ENCODE measurements at regions of chr14 and their contacts with region 1.

Region 1: GRCh38 chr14:22059201-22059600 is 385.6 kb upstream of the OR4E1 start:
- DNase-seq: no peak
- H3K4me3 ChIP-seq: no peak overlapping the region
- H3K27ac ChIP-seq: no peak overlapping the region
- H3K4me1 ChIP-seq: no peaks in the 10 kb centered on the region
- H3K27me3 ChIP-seq: no peaks in the 10 kb centered on the region
- CTCF ChIP-seq: no peak
- EP300 ChIP-seq: no peak
- POLR2A ChIP-seq: no peak
- RAD21 ChIP-seq: no peak

Region 2: GRCh38 chr14:21987937-21988336 is 71.3 kb before region 1 on chr14:
- CTCF ChIA-PET with region 1: no interaction called
- POLR2A ChIA-PET with region 1: no interaction called
- DNase-seq: no peak
- H3K4me3 ChIP-seq: no peak overlapping the region
- H3K27ac ChIP-seq: no peak overlapping the region
- H3K4me1 ChIP-seq: no peaks in the 10 kb centered on the region
- H3K27me3 ChIP-seq: peaks cover 0 to 1% (median 0%) of the 10 kb centered on the region in 4 experiments; a peak in 1 of 7 replicates
- CTCF ChIP-seq: peak in 2 of 3 experiments; percentile 62 to 78; a peak in 3 of 4 replicates
- EP300 ChIP-seq: no peak
- POLR2A ChIP-seq: no peak
- RAD21 ChIP-seq: peak; percentile 38 to 55

Region 3: GRCh38 chr14:22047115-22047514 is 12.1 kb before region 1 on chr14:
- CTCF ChIA-PET with region 1: interaction called, 16 read pairs
- POLR2A ChIA-PET with region 1: no interaction called
- DNase-seq: no peak
- H3K4me3 ChIP-seq: no peak overlapping the region
- H3K27ac ChIP-seq: no peak overlapping the region
- H3K4me1 ChIP-seq: no peaks in the 10 kb centered on the region
- H3K27me3 ChIP-seq: no peaks in the 10 kb centered on the region
- CTCF ChIP-seq: peak; percentile 13 to 71 (median 58)
- EP300 ChIP-seq: no peak
- POLR2A ChIP-seq: no peak
- RAD21 ChIP-seq: peak; percentile 55 to 65

Measured in H1 (cell line).